ENCODE measurements at regions of chr1 and their contacts with region 1.

Region 1: GRCh38 chr1:66374561-66375111 is 159.3 kb upstream of the SGIP1 start:
- DNase-seq: peak; percentile 61
- ATAC-seq: peak; percentile 70
- H3K4me3 Mint-ChIP-seq: peak overlapping the region; percentile 69
- H3K27ac Mint-ChIP-seq: peak overlapping the region; percentile 97
- H3K4me1 Mint-ChIP-seq: peaks cover 75% of the 10 kb centered on the region
- H3K27me3 Mint-ChIP-seq: no peaks in the 10 kb centered on the region

Region 2: GRCh38 chr1:65419681-65420589 is 954.7 kb before region 1 on chr1:
- CTCF ChIA-PET with region 1: no interaction called
- POLR2A ChIA-PET with region 1: no interaction called
- intact Hi-C with region 1: loop called in 1 of 2 experiments (anchors 5 kb)
- DNase-seq: peak; percentile 99
- ATAC-seq: peak; percentile 96
- H3K4me3 Mint-ChIP-seq: no peak overlapping the region
- H3K27ac Mint-ChIP-seq: peak overlapping the region; percentile 94
- H3K4me1 Mint-ChIP-seq: peaks cover 13% of the 10 kb centered on the region
- H3K27me3 Mint-ChIP-seq: no peaks in the 10 kb centered on the region

Region 3: DNA sequence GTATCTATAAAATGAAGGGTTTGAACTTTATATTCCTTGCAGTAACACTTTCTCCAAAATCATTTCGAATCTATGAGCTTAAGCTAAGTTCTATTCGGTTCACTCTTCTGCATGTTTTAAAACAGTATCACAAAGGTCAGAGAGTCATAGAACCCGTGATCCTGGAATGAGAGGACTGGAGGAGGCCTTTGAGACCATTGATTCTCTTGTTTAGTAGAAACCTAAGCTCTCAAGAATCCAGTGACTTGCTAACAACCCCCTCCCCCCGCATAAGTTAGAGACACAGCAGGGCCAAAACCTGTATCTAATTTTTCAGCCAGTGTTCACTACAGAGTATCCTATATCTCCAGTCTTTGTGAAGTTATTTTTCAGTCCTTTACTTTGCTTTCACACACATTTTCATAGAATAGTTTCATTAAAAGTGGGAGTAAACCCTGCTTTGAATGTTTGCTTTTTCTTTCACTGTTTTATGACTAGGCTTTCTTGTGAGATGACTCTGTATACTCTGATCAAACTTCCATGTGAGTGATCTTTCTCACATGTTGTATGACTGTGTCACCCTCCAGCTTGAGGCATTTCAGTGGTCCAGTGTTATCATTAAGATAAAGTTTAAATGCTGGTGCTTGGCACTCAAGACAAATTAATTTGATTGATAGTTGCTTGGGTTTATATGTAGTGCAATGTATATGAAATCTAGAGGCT is 116.1 kb before region 1 on chr1:
- CTCF ChIA-PET with region 1: interaction called, 5 read pairs
- POLR2A ChIA-PET with region 1: no interaction called
- intact Hi-C with region 1: loop called (anchors 1 kb)
- DNase-seq: no peak
- ATAC-seq: peak; percentile 91
- H3K4me3 Mint-ChIP-seq: no peak overlapping the region
- H3K27ac Mint-ChIP-seq: peak overlapping the region; percentile 68
- H3K4me1 Mint-ChIP-seq: peaks cover 90% of the 10 kb centered on the region
- H3K27me3 Mint-ChIP-seq: no peaks in the 10 kb centered on the region

Region 4: GRCh38 chr1:66331657-66332547 is 42.7 kb before region 1 on chr1:
- CTCF ChIA-PET with region 1: interaction called, 5 read pairs
- POLR2A ChIA-PET with region 1: interaction called, 5 read pairs
- intact Hi-C with region 1: loop called (anchors 1 kb)
- DNase-seq: peak; percentile 75
- ATAC-seq: peak; percentile 40
- H3K4me3 Mint-ChIP-seq: peak overlapping the region; percentile 91
- H3K27ac Mint-ChIP-seq: peak overlapping the region; percentile 98
- H3K4me1 Mint-ChIP-seq: peaks cover 44% of the 10 kb centered on the region
- H3K27me3 Mint-ChIP-seq: no peaks in the 10 kb centered on the region

Region 5: GRCh38 chr1:66396212-66396890 is 21.7 kb after region 1 on chr1:
- CTCF ChIA-PET with region 1: interaction called, 3 read pairs
- POLR2A ChIA-PET with region 1: interaction called, 4 read pairs
- intact Hi-C with region 1: loop called (anchors 1 kb)
- DNase-seq: peak; percentile 39
- ATAC-seq: peak; percentile 56
- H3K4me3 Mint-ChIP-seq: no peak overlapping the region
- H3K27ac Mint-ChIP-seq: no peak overlapping the region
- H3K4me1 Mint-ChIP-seq: peaks cover 39% of the 10 kb centered on the region
- H3K27me3 Mint-ChIP-seq: peaks cover 2% of the 10 kb centered on the region

Region 6: GRCh38 chr1:66598670-66599069 is 224.0 kb after region 1 on chr1:
- CTCF ChIA-PET with region 1: no interaction called
- POLR2A ChIA-PET with region 1: no interaction called
- intact Hi-C with region 1: no loop called
- DNase-seq: no peak
- ATAC-seq: no peak
- H3K4me3 Mint-ChIP-seq: no peak overlapping the region
- H3K27ac Mint-ChIP-seq: no peak overlapping the region
- H3K4me1 Mint-ChIP-seq: no peaks in the 10 kb centered on the region
- H3K27me3 Mint-ChIP-seq: peaks cover 12% of the 10 kb centered on the region

Region 7: DNA sequence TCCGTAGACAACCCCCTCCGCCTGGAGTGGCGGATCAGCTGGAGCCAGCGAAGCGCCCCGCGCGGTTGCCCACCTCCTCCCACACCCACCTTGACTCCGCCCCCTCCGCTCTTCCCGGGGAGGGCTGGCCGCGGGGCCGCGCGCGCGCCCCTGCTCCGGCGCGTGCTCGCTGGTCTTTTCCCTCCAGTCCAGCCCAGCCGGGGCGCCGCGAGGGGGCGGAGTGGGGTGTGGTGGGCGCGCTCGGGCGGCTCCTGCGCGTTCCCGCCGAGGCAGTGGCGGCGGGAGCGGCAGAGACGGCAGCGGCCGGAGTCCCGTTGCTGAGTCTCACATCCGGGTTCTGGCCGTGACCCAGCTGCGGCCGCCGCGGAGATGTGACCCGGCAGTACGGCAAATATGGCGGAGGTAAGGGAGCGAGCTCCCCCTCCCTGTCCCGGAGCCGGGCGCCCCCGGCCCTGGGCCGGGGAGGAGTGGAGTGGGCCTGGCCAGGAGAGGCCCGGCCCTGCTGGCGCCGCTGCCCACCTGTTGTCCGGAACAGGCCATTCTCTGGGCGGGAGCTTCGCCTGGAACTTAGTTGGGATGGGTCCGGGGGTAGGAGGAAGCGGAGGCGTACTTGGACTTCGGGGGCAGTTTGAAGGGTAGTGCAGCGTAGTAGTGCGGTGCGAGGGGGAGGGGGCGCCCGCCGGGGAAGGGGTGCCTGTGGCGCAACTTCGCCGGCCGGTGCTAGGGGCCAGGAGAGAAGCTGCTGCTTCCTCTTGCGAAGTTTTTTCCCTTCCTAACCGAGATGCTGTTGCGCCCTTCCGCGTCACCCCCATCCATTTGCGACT is 555.6 kb after region 1 on chr1:
- CTCF ChIA-PET with region 1: no interaction called
- POLR2A ChIA-PET with region 1: no interaction called
- intact Hi-C with region 1: loop called in 1 of 2 experiments (anchors 10 kb)
- DNase-seq: peak; percentile 96
- ATAC-seq: peak; percentile 63
- H3K4me3 Mint-ChIP-seq: peak overlapping the region; percentile 86
- H3K27ac Mint-ChIP-seq: peak overlapping the region; percentile 94
- H3K4me1 Mint-ChIP-seq: peaks cover 53% of the 10 kb centered on the region
- H3K27me3 Mint-ChIP-seq: no peaks in the 10 kb centered on the region

Region 8: DNA sequence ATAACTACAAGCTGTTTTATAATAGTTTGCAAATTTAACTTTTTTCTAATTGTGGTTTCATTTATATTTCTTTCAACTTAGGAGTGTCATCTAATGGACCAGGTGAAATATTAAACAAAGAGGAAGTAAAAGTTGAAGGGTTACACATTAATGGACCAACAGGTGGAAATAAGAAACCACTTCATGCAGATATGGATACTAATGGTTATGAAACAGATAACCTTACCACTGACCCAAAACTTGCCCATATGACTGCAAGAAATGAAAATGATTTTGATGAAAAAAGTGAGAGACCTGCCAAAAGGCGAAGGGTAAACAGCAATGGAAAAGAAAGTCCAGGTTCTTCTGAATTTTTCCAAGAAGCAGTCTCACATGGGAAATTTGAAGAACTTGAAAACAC is 609.9 kb after region 1 on chr1:
- CTCF ChIA-PET with region 1: no interaction called
- POLR2A ChIA-PET with region 1: no interaction called
- intact Hi-C with region 1: no loop called
- DNase-seq: no peak
- ATAC-seq: no peak
- H3K4me3 Mint-ChIP-seq: no peak overlapping the region
- H3K27ac Mint-ChIP-seq: peak overlapping the region; percentile 52
- H3K4me1 Mint-ChIP-seq: peaks cover 40% of the 10 kb centered on the region
- H3K27me3 Mint-ChIP-seq: no peaks in the 10 kb centered on the region

Measured in activated CD4-positive, alpha-beta T cell treated with anti-CD3 and anti-CD28 coated beads for 36 hours (primary cell).